A549 (cell line): ENCODE measurements at regions of chr13 and their contacts with region 1.

Region 1: GRCh38 chr13:97109841-97110492 is 112.2 kb upstream of the MBNL2 start:
- DNase-seq: peak; percentile 74 to 83
- ATAC-seq: peak; percentile 97 to 98
- H3K4me3 ChIP-seq: no peak overlapping the region
- H3K27ac ChIP-seq: peak overlapping the region; percentile 61 to 64; a peak in 5 of 6 replicates
- H3K4me1 ChIP-seq: peaks cover 46% of the 10 kb centered on the region
- CTCF ChIP-seq: peak; percentile 89
- EP300 ChIP-seq: no peak
- POLR2A ChIP-seq: no peak
- RAD21 ChIP-seq: peak; percentile 95 to 99

Region 2: DNA sequence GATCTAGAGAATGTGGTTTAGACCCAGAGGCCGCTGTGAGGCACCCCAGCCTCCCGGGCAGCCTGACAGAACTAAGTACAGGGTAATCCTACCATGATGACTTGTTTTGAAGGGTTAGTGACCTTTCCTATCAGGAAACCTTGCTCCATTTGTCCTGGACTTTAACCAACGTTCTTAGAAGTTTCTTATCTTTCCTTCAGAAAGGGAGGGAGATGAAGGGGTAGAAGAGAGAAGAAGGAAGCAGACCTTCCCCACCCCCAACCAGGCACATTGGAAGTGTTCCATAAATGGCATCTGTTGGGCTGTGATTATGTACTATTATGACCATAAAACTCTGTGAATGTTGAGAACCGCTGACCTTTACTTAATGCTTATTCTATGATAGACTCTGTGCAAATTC is 299.9 kb before region 1 on chr13:
- CTCF ChIA-PET with region 1: no interaction called
- POLR2A ChIA-PET with region 1: no interaction called
- DNase-seq: no peak
- ATAC-seq: no peak
- H3K4me3 ChIP-seq: no peak overlapping the region
- H3K27ac ChIP-seq: no peak overlapping the region
- H3K4me1 ChIP-seq: no peaks in the 10 kb centered on the region
- CTCF ChIP-seq: no peak
- EP300 ChIP-seq: no peak
- POLR2A ChIP-seq: no peak
- RAD21 ChIP-seq: no peak

Region 3: GRCh38 chr13:96880419-96880818 is 229.5 kb before region 1 on chr13:
- CTCF ChIA-PET with region 1: no interaction called
- POLR2A ChIA-PET with region 1: no interaction called
- DNase-seq: no peak
- ATAC-seq: no peak
- H3K4me3 ChIP-seq: no peak overlapping the region
- H3K27ac ChIP-seq: no peak overlapping the region
- H3K4me1 ChIP-seq: no peaks in the 10 kb centered on the region
- CTCF ChIP-seq: no peak
- EP300 ChIP-seq: no peak
- POLR2A ChIP-seq: no peak
- RAD21 ChIP-seq: no peak

Region 4: GRCh38 chr13:97015661-97016350 is 94.2 kb before region 1 on chr13:
- CTCF ChIA-PET with region 1: no interaction called
- POLR2A ChIA-PET with region 1: no interaction called
- DNase-seq: no peak
- ATAC-seq: no peak
- H3K4me3 ChIP-seq: no peak overlapping the region
- H3K27ac ChIP-seq: no peak overlapping the region
- H3K4me1 ChIP-seq: no peaks in the 10 kb centered on the region
- CTCF ChIP-seq: no peak
- EP300 ChIP-seq: no peak
- POLR2A ChIP-seq: no peak
- RAD21 ChIP-seq: no peak

Region 5: DNA sequence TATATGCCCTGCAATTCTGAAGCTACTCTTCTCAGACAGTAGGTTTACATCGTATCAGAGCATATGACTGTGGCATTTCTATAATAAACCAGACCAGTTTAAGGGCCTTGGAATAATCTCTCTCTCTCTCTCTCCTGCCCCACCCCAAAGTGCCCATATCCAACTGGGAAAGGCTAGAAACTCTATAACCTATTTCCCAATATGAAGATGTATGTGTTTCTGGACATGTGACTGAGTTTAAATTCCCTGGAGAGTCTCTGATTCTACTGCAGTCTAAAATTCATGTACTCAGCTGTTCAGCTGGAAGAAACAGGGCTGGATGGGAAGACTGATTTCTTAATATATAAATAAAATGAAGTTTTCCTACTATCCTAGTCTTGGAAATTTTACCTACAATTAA is 20.2 kb after region 1 on chr13:
- CTCF ChIA-PET with region 1: interaction called, 15 read pairs
- POLR2A ChIA-PET with region 1: no interaction called
- DNase-seq: no peak
- ATAC-seq: no peak
- H3K4me3 ChIP-seq: no peak overlapping the region
- H3K27ac ChIP-seq: no peak overlapping the region
- H3K4me1 ChIP-seq: peaks cover 31% of the 10 kb centered on the region
- CTCF ChIP-seq: no peak
- EP300 ChIP-seq: no peak
- POLR2A ChIP-seq: no peak
- RAD21 ChIP-seq: no peak

Region 6: GRCh38 chr13:97212601-97213040 is 102.7 kb after region 1 on chr13:
- CTCF ChIA-PET with region 1: interaction called, 171 read pairs
- POLR2A ChIA-PET with region 1: no interaction called
- DNase-seq: peak; percentile 32 to 48
- ATAC-seq: peak; percentile 81 to 94; a peak in 4 of 6 replicates
- H3K4me3 ChIP-seq: no peak overlapping the region
- H3K27ac ChIP-seq: peak overlapping the region in 1 of 2 experiments; percentile 32; a peak in 1 of 6 replicates
- H3K4me1 ChIP-seq: no peaks in the 10 kb centered on the region; the same call in 2 of the 3 replicates
- CTCF ChIP-seq: peak; percentile 54
- EP300 ChIP-seq: no peak
- POLR2A ChIP-seq: no peak
- RAD21 ChIP-seq: peak; percentile 71 to 80

Region 7: GRCh38 chr13:97257800-97258799 is 148.1 kb after region 1 on chr13:
- CTCF ChIA-PET with region 1: interaction called, 17 read pairs
- POLR2A ChIA-PET with region 1: no interaction called
- DNase-seq: peak; percentile 85 to 95
- ATAC-seq: peak; percentile 82 to 87
- H3K4me3 ChIP-seq: peak overlapping the region; percentile 16; the same call in 1 of the 3 replicates
- H3K27ac ChIP-seq: peak overlapping the region; percentile 99 to 100
- H3K4me1 ChIP-seq: peaks cover 85% of the 10 kb centered on the region
- CTCF ChIP-seq: peak; percentile 31
- EP300 ChIP-seq: peak; percentile 81 to 85; a peak in 3 of 5 replicates
- POLR2A ChIP-seq: no peak
- RAD21 ChIP-seq: peak; percentile 11 to 29; a peak in 1 of 5 replicates

Region 8: GRCh38 chr13:97344265-97345175 is 234.6 kb after region 1 on chr13:
- CTCF ChIA-PET with region 1: interaction called, 23 read pairs
- POLR2A ChIA-PET with region 1: no interaction called
- DNase-seq: peak in 1 of 2 experiments; percentile 57
- ATAC-seq: peak; percentile 84 to 89; a peak in 4 of 6 replicates
- H3K4me3 ChIP-seq: no peak overlapping the region
- H3K27ac ChIP-seq: peak overlapping the region; percentile 59 to 72
- H3K4me1 ChIP-seq: peaks cover 42% of the 10 kb centered on the region
- CTCF ChIP-seq: peak; percentile 75
- EP300 ChIP-seq: no peak
- POLR2A ChIP-seq: no peak
- RAD21 ChIP-seq: peak; percentile 83 to 89

Region 9: DNA sequence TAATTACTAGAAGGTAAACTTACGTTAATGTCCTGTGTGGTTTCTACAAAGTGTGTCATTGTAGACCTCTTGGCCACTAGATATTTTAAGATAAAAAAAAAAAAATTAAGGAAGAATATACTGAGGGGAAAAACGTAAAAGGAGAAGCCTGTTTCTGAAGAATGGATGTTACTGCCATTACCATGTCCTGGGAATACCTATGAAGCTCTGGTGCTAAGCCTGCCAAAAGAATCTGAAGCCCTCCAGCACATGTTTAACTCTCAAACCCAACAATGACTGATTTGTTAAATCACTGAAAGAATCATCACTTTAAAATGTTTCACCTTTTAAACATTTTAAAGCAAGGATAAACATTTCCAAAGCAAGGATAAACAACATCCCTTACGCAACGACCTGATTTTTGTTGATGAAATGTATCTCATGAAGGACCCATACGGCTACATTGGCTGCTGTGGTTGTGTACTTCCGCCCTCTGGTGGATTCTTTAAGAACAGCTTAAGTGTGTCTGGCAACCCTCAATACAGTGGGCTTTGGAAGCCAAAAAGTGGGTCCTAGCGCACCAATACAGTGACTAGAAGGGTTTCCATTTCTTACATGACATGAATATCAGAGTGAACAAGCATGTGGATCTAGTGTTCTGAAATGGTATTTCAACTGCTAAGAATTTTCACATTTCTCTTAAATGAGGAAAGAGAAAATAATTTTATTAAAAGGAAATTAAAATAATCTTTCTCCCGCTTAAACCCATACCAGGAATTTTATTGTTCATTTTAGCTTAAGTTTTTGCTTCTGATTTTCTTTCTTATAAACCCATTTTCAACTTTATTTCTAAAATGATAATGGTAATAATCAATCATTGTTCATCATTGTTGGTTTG is 249.5 kb after region 1 on chr13:
- CTCF ChIA-PET with region 1: interaction called, 39 read pairs
- POLR2A ChIA-PET with region 1: interaction called, 3 read pairs
- DNase-seq: peak; percentile 40 to 74
- ATAC-seq: peak; percentile 89 to 96
- H3K4me3 ChIP-seq: no peak overlapping the region
- H3K27ac ChIP-seq: peak overlapping the region in 1 of 2 experiments; percentile 12; a peak in 2 of 6 replicates
- H3K4me1 ChIP-seq: peaks cover 16% of the 10 kb centered on the region; the same call in 1 of the 3 replicates
- CTCF ChIP-seq: peak; percentile 76
- EP300 ChIP-seq: no peak
- POLR2A ChIP-seq: no peak
- RAD21 ChIP-seq: peak; percentile 85 to 90